A673 (cell line): ENCODE measurements at regions of chr1 and their contacts with region 1.

Region 1: GRCh38 chr1:179175011-179175841 is 54.3 kb downstream of the ABL2 start:
- DNase-seq: peak; percentile 85
- H3K4me3 ChIP-seq: no peak overlapping the region
- H3K27ac ChIP-seq: no peak overlapping the region
- H3K4me1 ChIP-seq: peaks cover 21% of the 10 kb centered on the region
- H3K27me3 ChIP-seq: no peaks in the 10 kb centered on the region
- CTCF ChIP-seq: no peak

Region 2: DNA sequence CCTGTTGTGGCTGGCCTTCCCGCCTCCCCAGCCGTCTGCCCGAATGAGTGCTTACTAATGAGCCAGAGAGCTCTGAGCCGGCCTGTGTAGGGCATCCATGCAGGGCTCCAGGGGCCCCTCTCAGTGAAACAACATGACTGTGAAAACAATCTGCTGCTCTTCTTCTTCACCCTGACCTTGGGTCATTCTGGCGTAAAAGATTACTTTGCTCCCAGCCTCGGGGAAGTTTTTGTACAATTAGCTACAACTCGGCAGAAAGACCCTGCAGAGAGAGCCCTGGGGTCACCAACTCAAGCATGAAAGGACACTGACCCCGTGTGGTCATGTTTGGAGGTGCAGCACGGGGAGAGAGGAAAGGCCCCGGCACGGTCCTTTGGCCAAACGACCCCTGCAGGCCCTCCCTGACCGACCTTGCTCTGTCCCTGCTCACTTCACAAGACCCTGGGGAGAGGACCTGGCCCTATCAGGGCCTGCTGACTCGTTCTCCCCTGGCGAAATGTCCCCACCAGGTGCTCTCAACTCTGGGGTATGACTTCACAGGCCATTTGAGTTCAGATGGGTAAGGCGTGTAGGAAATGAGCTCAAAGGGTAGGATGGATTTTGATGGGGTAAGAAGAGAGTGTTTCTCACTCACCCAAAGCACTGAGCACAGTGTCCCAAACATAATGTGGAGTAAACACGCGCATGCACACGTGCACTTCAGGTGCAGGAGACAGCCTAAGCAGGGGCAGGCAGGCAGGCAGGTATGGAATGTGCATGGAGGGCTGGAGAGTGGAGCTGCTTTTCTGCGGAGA is 172.5 kb before region 1 on chr1:
- CTCF ChIA-PET with region 1: no interaction called
- POLR2A ChIA-PET with region 1: no interaction called
- intact Hi-C with region 1: no loop called
- DNase-seq: peak; percentile 69
- H3K4me3 ChIP-seq: no peak overlapping the region
- H3K27ac ChIP-seq: no peak overlapping the region
- H3K4me1 ChIP-seq: no peaks in the 10 kb centered on the region
- H3K27me3 ChIP-seq: no peaks in the 10 kb centered on the region
- CTCF ChIP-seq: peak; percentile 91

Region 3: DNA sequence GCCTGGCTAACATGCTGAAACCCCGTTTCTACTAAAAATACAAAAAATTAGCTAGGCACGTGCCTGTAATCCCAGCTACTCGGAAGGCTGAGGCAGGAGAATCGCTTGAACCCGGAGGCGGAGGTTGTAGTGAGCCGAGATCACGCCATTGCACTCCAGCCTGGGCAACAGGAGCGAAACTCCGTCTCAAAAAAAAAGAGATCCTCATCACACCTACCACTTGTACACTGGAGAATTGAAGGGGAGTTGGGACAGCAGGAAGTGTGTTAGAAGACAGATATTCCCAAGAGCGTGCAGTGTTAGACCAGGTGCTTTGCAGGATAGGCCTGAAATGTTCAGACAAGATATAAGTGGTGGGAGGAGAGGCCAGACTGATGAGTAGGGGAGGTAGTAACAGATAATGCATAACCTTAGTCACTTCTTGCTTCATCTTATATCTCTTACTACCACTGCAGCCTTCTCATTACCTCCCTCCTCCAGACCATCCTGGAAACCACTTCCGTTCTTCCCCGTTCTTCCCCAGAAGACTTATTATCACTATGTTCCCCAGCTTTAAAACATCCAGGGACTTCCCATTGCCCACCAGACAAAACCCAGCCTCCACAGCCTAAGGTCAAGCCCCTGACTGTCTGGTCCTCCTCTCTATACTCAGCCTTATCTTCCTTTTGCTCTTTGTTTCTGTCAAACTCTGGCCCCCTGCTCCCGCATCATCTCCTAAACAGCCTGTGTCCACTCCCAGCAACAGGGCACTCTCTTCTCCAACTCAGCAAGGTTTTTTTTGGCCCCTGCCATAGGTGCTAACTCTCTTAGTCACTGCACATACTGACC is 128.2 kb before region 1 on chr1:
- CTCF ChIA-PET with region 1: no interaction called
- POLR2A ChIA-PET with region 1: no interaction called
- intact Hi-C with region 1: no loop called
- DNase-seq: no peak
- H3K4me3 ChIP-seq: no peak overlapping the region
- H3K27ac ChIP-seq: no peak overlapping the region
- H3K4me1 ChIP-seq: no peaks in the 10 kb centered on the region
- H3K27me3 ChIP-seq: no peaks in the 10 kb centered on the region
- CTCF ChIP-seq: no peak

Region 4: GRCh38 chr1:179129702-179130473 is 45.3 kb before region 1 on chr1:
- CTCF ChIA-PET with region 1: no interaction called
- POLR2A ChIA-PET with region 1: no interaction called
- intact Hi-C with region 1: loop called (anchors 5 kb)
- DNase-seq: no peak
- H3K4me3 ChIP-seq: no peak overlapping the region
- H3K27ac ChIP-seq: no peak overlapping the region
- H3K4me1 ChIP-seq: no peaks in the 10 kb centered on the region
- H3K27me3 ChIP-seq: no peaks in the 10 kb centered on the region
- CTCF ChIP-seq: no peak

Region 5: DNA sequence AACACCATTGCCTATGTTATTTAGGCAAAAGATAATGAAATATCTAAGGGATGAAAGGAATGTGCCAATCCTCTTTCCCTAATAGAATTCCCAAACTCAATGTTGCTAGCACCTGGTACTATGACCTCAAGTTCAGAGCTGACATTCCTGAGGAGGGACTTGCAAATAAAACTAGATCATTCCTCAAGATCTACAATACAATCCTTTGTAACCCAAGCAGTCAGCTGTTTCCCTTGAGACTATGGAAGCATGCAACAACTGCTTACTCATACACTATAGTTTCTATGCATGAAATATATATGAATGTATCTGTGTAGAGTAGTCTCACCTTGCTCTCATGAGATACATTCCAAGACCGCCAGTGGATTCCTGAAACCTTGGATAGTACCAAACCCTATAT is 10.7 kb before region 1 on chr1:
- CTCF ChIA-PET with region 1: no interaction called
- POLR2A ChIA-PET with region 1: no interaction called
- intact Hi-C with region 1: no loop called
- DNase-seq: no peak
- H3K4me3 ChIP-seq: no peak overlapping the region
- H3K27ac ChIP-seq: no peak overlapping the region
- H3K4me1 ChIP-seq: peaks cover 13% of the 10 kb centered on the region
- H3K27me3 ChIP-seq: no peaks in the 10 kb centered on the region
- CTCF ChIP-seq: no peak